ENCODE measurements at regions of chr14 and their contacts with region 1.

Region 1: DNA sequence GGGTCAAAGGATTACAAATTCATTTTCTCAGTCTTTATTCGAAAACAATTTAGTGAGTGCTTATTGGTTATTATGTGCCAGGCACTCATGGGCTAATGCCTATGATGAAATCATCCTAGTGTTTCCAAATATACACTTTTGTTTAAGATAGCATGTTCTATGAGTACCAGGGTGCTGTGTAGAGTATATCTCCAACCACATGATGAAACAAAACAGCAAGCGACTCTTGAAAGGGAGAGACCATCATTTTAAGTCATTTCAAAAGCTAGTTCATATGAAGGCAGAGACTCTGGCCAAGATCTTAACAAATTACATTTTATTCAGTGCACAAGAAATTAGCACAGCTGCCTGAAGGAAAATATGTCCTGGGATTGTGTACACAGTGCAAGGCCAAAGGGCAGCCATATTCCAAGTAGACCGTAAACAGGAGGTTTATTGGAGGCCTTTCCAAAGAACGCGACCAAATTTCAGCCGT is 204.2 kb downstream of the EFCAB11 start:
- DNase-seq: no peak
- H3K4me3 Mint-ChIP-seq: no peak overlapping the region
- H3K27ac Mint-ChIP-seq: peak overlapping the region; percentile 70
- H3K4me1 Mint-ChIP-seq: peaks cover 45% of the 10 kb centered on the region
- H3K27me3 Mint-ChIP-seq: no peaks in the 10 kb centered on the region

Region 2: GRCh38 chr14:89422181-89422951 is 328.0 kb before region 1 on chr14:
- CTCF ChIA-PET with region 1: no interaction called
- POLR2A ChIA-PET with region 1: no interaction called
- intact Hi-C with region 1: loop called (anchors 2 kb)
- DNase-seq: peak; percentile 74
- H3K4me3 Mint-ChIP-seq: no peak overlapping the region
- H3K27ac Mint-ChIP-seq: peak overlapping the region; percentile 73
- H3K4me1 Mint-ChIP-seq: peaks cover 72% of the 10 kb centered on the region
- H3K27me3 Mint-ChIP-seq: no peaks in the 10 kb centered on the region

Region 3: DNA sequence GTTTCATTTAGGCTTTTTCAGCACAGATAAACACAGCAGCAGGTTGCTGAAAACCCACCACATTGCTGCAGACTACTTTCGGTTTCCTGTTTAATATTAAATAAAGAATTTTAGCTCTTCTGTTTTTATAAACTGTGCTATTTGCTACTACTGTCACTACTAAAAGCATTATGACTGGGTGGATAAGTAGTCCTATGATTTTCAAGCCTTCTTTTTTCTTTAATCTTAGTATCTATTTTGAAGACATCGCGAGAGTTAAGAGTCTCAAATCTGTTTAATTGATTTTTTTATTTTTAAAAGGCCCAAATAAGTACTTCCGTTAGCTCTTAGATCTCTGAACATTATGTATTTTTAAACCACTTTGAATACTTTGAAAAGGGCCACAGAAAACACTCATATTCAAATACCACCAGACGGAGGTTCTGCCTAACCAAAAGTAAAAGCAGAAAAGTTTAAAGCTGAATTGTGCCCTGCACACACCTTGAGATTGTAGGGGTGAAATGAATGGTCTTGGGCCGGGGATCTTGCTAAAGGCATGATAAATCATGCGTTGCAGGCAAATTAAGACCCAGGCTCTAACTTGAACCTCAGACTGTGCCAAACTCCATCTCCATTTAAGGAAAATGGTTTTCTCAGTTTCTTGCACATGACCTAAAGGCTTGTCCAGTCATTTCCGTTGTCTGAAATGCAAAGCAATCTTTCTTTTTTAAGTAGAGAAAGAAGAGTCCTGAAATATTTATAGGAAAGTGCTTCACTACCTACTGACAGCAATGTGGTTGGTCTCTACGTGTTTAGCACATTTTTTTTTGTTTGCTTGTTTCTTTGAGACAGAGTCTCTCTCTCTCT is 319.7 kb before region 1 on chr14:
- CTCF ChIA-PET with region 1: interaction called, 3 read pairs
- POLR2A ChIA-PET with region 1: no interaction called
- intact Hi-C with region 1: loop called (anchors 1 kb)
- DNase-seq: peak; percentile 75
- H3K4me3 Mint-ChIP-seq: peak overlapping the region; percentile 67
- H3K27ac Mint-ChIP-seq: peak overlapping the region; percentile 88
- H3K4me1 Mint-ChIP-seq: peaks cover 69% of the 10 kb centered on the region
- H3K27me3 Mint-ChIP-seq: no peaks in the 10 kb centered on the region

Region 4: GRCh38 chr14:89613260-89614008 is 136.9 kb before region 1 on chr14:
- CTCF ChIA-PET with region 1: interaction called, 3 read pairs
- POLR2A ChIA-PET with region 1: interaction called, 3 read pairs
- intact Hi-C with region 1: loop called (anchors 2 kb)
- DNase-seq: peak; percentile 69
- H3K4me3 Mint-ChIP-seq: peak overlapping the region; percentile 56
- H3K27ac Mint-ChIP-seq: peak overlapping the region; percentile 86
- H3K4me1 Mint-ChIP-seq: peaks cover 75% of the 10 kb centered on the region
- H3K27me3 Mint-ChIP-seq: no peaks in the 10 kb centered on the region

Region 5: DNA sequence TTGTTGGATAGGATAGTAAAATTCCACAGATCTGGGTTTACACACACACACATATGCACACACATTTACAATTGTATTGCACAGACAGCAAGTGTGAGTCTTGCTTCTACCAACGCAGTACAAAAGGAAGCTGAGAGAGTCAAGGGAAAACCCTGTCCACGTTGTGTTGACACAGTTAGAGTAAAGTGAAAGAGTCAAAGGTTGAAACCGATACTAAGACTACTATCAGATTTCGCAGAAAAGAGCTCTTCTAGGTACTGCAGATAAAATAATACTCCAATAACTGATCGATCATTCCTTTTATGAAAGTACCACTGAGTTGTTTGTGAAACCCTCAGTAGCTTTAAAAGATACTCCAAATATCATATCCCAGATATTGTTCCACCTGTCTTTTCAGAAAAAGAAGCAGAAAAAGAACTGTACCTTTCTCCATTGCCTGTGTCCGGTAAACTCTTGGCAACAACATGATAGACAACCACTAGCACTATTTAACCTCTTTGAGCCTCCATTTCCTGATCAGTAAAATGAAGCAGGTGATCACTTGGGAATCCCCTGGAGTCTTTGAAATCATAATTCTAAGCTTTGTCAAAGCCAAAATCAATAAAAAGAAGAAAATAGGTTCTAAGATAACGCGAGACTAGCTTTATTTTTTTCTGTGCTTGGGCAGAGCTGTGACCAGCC is 108.7 kb before region 1 on chr14:
- CTCF ChIA-PET with region 1: interaction called, 3 read pairs
- POLR2A ChIA-PET with region 1: interaction called, 13 read pairs
- intact Hi-C with region 1: loop called (anchors 1 kb)
- DNase-seq: peak; percentile 35
- H3K4me3 Mint-ChIP-seq: peak overlapping the region; percentile 53
- H3K27ac Mint-ChIP-seq: peak overlapping the region; percentile 83
- H3K4me1 Mint-ChIP-seq: peaks cover 54% of the 10 kb centered on the region
- H3K27me3 Mint-ChIP-seq: no peaks in the 10 kb centered on the region

Region 6: GRCh38 chr14:89767861-89768268 is 17.5 kb after region 1 on chr14:
- CTCF ChIA-PET with region 1: interaction called, 3 read pairs
- POLR2A ChIA-PET with region 1: no interaction called
- intact Hi-C with region 1: loop called (anchors 1 kb)
- DNase-seq: peak; percentile 75
- H3K4me3 Mint-ChIP-seq: no peak overlapping the region
- H3K27ac Mint-ChIP-seq: peak overlapping the region; percentile 39
- H3K4me1 Mint-ChIP-seq: peaks cover 18% of the 10 kb centered on the region
- H3K27me3 Mint-ChIP-seq: peaks cover 2% of the 10 kb centered on the region

Region 7: GRCh38 chr14:90140298-90140955 is 390.1 kb after region 1 on chr14:
- CTCF ChIA-PET with region 1: no interaction called
- POLR2A ChIA-PET with region 1: no interaction called
- intact Hi-C with region 1: no loop called
- DNase-seq: no peak
- H3K4me3 Mint-ChIP-seq: no peak overlapping the region
- H3K27ac Mint-ChIP-seq: no peak overlapping the region
- H3K4me1 Mint-ChIP-seq: no peaks in the 10 kb centered on the region
- H3K27me3 Mint-ChIP-seq: peaks cover 5% of the 10 kb centered on the region